HepG2 (cell line): ENCODE measurements at regions of chr2 and their contacts with region 1.

Region 1: GRCh38 chr2:240851078-240851991 is 17.3 kb upstream of the AGXT start:
- DNase-seq: peak; percentile 75
- ATAC-seq: peak; percentile 93
- H3K4me3 ChIP-seq: no peak overlapping the region; a peak in 1 of 6 replicates
- H3K27ac ChIP-seq: no peak overlapping the region
- H3K4me1 ChIP-seq: peaks cover 14% of the 10 kb centered on the region
- H3K27me3 ChIP-seq: peaks cover 3 to 39% of the 10 kb centered on the region in 2 experiments; a peak in 4 of 5 replicates
- CTCF ChIP-seq: peak; percentile 100
- EP300 ChIP-seq: no peak
- POLR2A ChIP-seq: no peak
- RAD21 ChIP-seq: peak; percentile 98

Region 2: GRCh38 chr2:240832205-240832727 is 19.1 kb before region 1 on chr2:
- CTCF ChIA-PET with region 1: no interaction called
- POLR2A ChIA-PET with region 1: no interaction called
- in situ Hi-C with region 1: no loop called
- intact Hi-C with region 1: no loop called
- DNase-seq: peak; percentile 85
- ATAC-seq: peak; percentile 85
- H3K4me3 ChIP-seq: peak overlapping the region in 2 of 3 experiments; percentile 19 to 57; a peak in 2 of 6 replicates
- H3K27ac ChIP-seq: no peak overlapping the region
- H3K4me1 ChIP-seq: peaks cover 7% of the 10 kb centered on the region
- H3K27me3 ChIP-seq: peaks cover 2 to 59% of the 10 kb centered on the region in 2 experiments
- CTCF ChIP-seq: no peak
- EP300 ChIP-seq: no peak
- POLR2A ChIP-seq: no peak
- RAD21 ChIP-seq: no peak

Region 3: DNA sequence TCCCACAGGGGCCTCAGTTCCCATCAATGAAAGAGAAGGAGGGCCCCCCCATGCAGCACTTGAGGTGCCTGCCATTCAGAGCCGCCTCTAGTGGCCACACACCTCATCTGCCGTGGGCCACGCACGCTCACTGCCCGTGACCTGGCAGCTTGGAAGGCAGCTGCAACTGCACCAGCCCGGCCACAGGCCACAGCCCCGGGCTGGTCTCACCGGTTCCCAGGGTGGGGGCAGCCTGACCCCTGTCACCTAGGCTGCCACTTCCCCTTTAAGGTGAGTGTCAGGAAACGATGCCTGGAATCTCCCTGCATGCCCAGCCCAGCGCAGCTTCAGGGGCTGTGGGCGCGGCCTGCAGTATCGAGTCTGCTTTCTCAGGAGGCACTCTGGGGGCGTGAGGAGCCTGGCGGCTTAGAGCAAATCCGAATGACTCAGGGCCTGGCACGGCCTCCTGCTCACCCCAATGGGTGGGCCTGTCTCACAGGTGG is 42.1 kb after region 1 on chr2:
- CTCF ChIA-PET with region 1: interaction called, 3 read pairs
- POLR2A ChIA-PET with region 1: no interaction called
- in situ Hi-C with region 1: no loop called
- intact Hi-C with region 1: loop called (anchors 1 kb)
- DNase-seq: no peak
- ATAC-seq: no peak
- H3K4me3 ChIP-seq: no peak overlapping the region; a peak in 1 of 6 replicates
- H3K27ac ChIP-seq: no peak overlapping the region
- H3K4me1 ChIP-seq: peaks cover 89% of the 10 kb centered on the region
- H3K27me3 ChIP-seq: no peaks in the 10 kb centered on the region; a peak in 1 of 5 replicates
- CTCF ChIP-seq: peak; percentile 17; the same call in 1 of the 2 replicates
- EP300 ChIP-seq: no peak
- POLR2A ChIP-seq: no peak
- RAD21 ChIP-seq: no peak

Region 4: DNA sequence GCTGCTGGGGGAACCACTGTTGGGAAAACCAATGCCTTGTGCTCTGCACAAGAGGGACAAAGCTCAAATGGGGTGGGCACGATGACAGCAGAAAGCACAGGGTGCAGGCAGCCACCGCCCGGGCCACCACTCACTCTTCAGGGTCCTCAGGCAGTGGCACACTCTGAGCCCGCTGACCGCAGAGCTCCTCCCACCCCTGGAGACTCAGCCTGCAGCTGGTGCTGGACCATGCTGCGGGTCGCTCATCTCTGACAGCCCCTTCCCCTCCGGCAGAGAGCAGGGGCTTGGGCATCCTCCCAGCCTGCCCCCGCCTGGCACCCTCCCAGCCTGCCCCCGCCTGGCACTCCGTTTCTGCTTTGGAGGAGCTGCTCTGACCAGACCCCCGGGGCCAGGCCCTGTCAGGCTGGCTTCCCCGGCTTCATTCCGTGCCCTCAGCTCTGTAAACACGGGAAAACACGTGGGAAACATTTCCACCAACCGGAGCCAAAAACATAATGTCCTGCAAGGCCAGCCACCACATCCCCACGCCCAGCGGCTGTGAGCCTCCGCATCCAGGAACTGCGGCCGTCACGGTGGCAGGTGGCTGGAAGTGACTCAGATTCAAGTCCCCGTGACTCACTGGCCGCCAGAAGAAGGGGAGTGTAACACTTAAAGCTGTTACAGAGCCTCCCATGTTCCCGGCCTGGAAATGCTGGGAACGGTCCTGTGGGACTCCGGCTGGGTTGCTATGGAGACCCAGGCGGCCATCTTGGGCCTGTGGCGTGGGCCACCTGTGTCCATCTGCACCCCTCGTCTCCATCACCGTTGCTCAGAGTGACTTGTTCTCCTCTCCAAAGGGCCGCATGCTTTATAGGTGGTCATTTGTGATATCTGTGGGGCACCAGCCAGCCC is 140.3 kb after region 1 on chr2:
- CTCF ChIA-PET with region 1: interaction called, 19 read pairs
- POLR2A ChIA-PET with region 1: no interaction called
- in situ Hi-C with region 1: loop called (anchors 5 kb)
- intact Hi-C with region 1: loop called (anchors 1 kb)
- DNase-seq: peak; percentile 58
- ATAC-seq: peak; percentile 6; the same call in 2 of the 3 replicates
- H3K4me3 ChIP-seq: peak overlapping the region in 1 of 3 experiments; percentile 19; a peak in 1 of 6 replicates
- H3K27ac ChIP-seq: no peak overlapping the region
- H3K4me1 ChIP-seq: peaks cover 47% of the 10 kb centered on the region
- H3K27me3 ChIP-seq: peaks cover 39 to 95% of the 10 kb centered on the region in 2 experiments
- CTCF ChIP-seq: no peak
- EP300 ChIP-seq: no peak
- POLR2A ChIP-seq: no peak
- RAD21 ChIP-seq: no peak

Region 5: GRCh38 chr2:241063587-241063986 is 212.3 kb after region 1 on chr2:
- CTCF ChIA-PET with region 1: no interaction called
- POLR2A ChIA-PET with region 1: no interaction called
- in situ Hi-C with region 1: no loop called
- intact Hi-C with region 1: loop called (anchors 2 kb)
- DNase-seq: no peak
- ATAC-seq: peak; percentile 62
- H3K4me3 ChIP-seq: peak overlapping the region in 1 of 3 experiments; percentile 54; a peak in 2 of 6 replicates
- H3K27ac ChIP-seq: no peak overlapping the region
- H3K4me1 ChIP-seq: 0 out of 2 replicates have a peak, but pooled peaks cover 8% of the 10 kb centered on the region
- H3K27me3 ChIP-seq: peaks cover 9 to 43% of the 10 kb centered on the region in 2 experiments
- CTCF ChIP-seq: peak; percentile 58
- EP300 ChIP-seq: no peak
- POLR2A ChIP-seq: no peak
- RAD21 ChIP-seq: no peak

Region 6: GRCh38 chr2:241161646-241162281 is 310.4 kb after region 1 on chr2:
- CTCF ChIA-PET with region 1: no interaction called
- POLR2A ChIA-PET with region 1: no interaction called
- in situ Hi-C with region 1: no loop called
- intact Hi-C with region 1: no loop called
- DNase-seq: no peak
- ATAC-seq: no peak
- H3K4me3 ChIP-seq: no peak overlapping the region
- H3K27ac ChIP-seq: no peak overlapping the region
- H3K4me1 ChIP-seq: no peaks in the 10 kb centered on the region
- H3K27me3 ChIP-seq: no peaks in the 10 kb centered on the region; a peak in 1 of 5 replicates
- CTCF ChIP-seq: no peak
- EP300 ChIP-seq: no peak
- POLR2A ChIP-seq: no peak
- RAD21 ChIP-seq: no peak

Region 7: GRCh38 chr2:241637000-241637791 is 785.9 kb after region 1 on chr2 and contains the starts of genes ATG4B and THAP4:
- CTCF ChIA-PET with region 1: no interaction called
- POLR2A ChIA-PET with region 1: no interaction called
- in situ Hi-C with region 1: loop called (anchors 25 kb)
- intact Hi-C with region 1: no loop called
- DNase-seq: peak; percentile 76
- ATAC-seq: peak; percentile 76
- H3K4me3 ChIP-seq: peak within 1 kb of the TSS; percentile 95 to 100 (median 99)
- H3K27ac ChIP-seq: peak within 1 kb of the TSS; percentile 100
- H3K4me1 ChIP-seq: peaks cover 55% of the 10 kb centered on the region
- H3K27me3 ChIP-seq: no peaks in the 10 kb centered on the region; a peak in 1 of 5 replicates
- CTCF ChIP-seq: 0 out of 2 replicates have a peak, but pooled peaks have one; percentile 4
- EP300 ChIP-seq: no peak; a peak in 2 of 4 replicates
- POLR2A ChIP-seq: peak in 1 of 2 experiments; percentile 90; a peak in 2 of 4 replicates
- RAD21 ChIP-seq: peak; percentile 68
- total RNA-seq, gene ATG4B: 95.5 and 96.3 TPM in 2 replicates
- total RNA-seq, gene THAP4: 68.2 and 75.7 TPM in 2 replicates